Naive thymus-derived CD4-positive, alpha-beta T cell (primary cell): ENCODE measurements at regions of chr20 and their contacts with region 1.

Region 1: DNA sequence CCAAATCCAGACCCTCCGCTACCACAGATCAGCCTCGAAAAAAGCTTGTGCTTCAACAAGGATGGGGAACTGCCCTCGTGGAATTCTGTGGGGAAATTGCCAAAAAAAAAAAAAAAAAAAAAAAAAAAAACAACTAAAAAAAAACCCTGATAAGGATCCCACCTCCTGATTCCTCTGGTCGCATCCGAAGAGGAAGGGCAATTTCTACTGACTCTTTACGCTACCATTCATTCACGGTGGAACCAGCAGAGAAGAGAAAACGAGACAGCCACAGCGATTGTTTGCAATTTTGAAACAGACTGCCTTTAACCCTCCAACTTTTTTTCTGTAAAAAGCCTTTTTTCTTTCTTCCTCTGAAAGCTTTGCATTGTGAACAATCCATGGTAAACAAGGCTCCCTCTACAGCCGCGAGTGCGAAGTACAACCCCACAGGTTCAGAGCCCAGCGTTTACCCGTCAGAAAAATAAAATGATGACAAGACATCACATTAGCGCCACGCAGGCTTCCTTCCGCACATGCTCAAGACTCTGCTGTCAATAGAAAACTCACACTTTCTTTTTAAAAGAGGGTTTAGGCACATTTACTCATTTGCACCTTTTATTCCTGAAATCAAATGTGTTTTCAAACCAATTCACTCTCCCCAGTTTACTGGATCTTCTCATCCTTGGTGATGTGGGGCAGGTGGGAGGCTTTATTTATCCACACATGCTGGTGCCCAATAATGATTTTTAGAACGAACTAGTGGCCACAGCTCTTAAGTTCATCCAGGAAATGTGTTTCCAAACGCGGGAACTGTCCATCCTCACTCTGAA is 100.0 kb downstream of the NOL4L start:
- DNase-seq: peak; percentile 60 to 94 (median 91)
- ATAC-seq: peak; percentile 92
- H3K4me3 ChIP-seq: peak overlapping the region; percentile 55
- H3K4me3 Mint-ChIP-seq: peak overlapping the region; percentile 82 to 95 (median 92)
- H3K27ac ChIP-seq: peak overlapping the region; percentile 67
- H3K27ac Mint-ChIP-seq: peak overlapping the region; percentile 80 to 98 (median 88)
- H3K4me1 ChIP-seq: peaks cover 8 to 34% of the 10 kb centered on the region in 2 donors
- H3K4me1 Mint-ChIP-seq: peaks cover 20 to 58% (median 51%) of the 10 kb centered on the region in 7 donors
- H3K27me3 ChIP-seq: no peaks in the 10 kb centered on the region
- H3K27me3 Mint-ChIP-seq: peaks cover 0 to 5% (median 0%) of the 10 kb centered on the region in 5 donors

Region 2: DNA sequence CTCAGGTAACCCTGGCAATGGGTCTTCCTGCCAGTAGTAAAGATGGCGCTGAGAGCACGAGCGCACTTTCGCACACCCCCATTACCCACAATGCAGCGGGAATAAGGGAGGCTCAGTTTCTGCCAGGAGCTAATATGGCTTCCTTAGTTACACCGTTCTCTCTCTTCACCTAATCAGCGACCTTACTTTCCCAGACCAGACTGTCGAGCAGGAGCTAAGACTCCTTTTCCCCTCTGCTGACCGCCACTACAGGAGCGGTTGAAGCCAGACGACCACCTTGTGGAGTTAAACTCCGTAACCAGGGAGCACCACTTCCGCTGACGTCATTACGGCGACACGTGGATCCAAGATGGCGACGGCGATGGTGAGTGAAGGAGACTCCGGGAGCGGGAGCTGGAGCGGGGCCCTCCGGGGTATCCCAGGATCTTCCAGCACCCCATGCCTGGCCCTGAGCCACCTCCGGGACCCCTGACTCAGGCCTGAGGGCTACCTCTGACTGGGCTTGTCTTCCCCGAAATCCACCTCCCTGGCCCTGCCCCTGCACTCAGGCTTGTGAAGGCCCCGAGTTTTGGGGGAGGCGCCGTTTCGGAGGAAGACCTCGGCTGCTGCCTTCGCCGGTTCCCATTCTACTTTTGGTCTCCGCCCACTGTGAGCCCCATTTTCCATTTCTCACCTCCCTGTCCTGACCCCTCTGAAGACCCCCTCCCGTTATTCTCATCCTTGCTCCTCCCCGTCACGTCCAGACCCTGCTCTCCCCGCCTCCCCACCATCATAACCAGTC is 375.6 kb before region 1 on chr20 and contains the start of gene TM9SF4:
- CTCF ChIA-PET with region 1: no interaction called
- POLR2A ChIA-PET with region 1: no interaction called
- intact Hi-C with region 1: loop called in 1 of 2 experiments (anchors 2 kb)
- DNase-seq: peak; percentile 87 to 96 (median 93)
- ATAC-seq: peak; percentile 92
- H3K4me3 ChIP-seq: peak within 1 kb of the TSS; percentile 92
- H3K4me3 Mint-ChIP-seq: peak within 1 kb of the TSS; percentile 78 to 100 (median 96)
- H3K27ac ChIP-seq: peak within 1 kb of the TSS; percentile 94
- H3K27ac Mint-ChIP-seq: peak within 1 kb of the TSS; percentile 95 to 100 (median 100)
- H3K4me1 ChIP-seq: peaks cover 11% of the 10 kb centered on the region in 2 donors
- H3K4me1 Mint-ChIP-seq: peaks cover 26 to 44% (median 39%) of the 10 kb centered on the region in 7 donors
- H3K27me3 ChIP-seq: no peaks in the 10 kb centered on the region
- H3K27me3 Mint-ChIP-seq: no peaks in the 10 kb centered on the region
- total RNA-seq, gene TM9SF4: 35.2 to 61.0 (median 41.5) TPM

Region 3: GRCh38 chr20:32336918-32337347 is 148.2 kb before region 1 on chr20:
- CTCF ChIA-PET with region 1: no interaction called
- POLR2A ChIA-PET with region 1: no interaction called
- intact Hi-C with region 1: loop called in 1 of 2 experiments (anchors 1 kb)
- DNase-seq: peak in 7 of 9 donors; percentile 18 to 57 (median 35)
- ATAC-seq: peak; percentile 79
- H3K4me3 ChIP-seq: no peak overlapping the region
- H3K4me3 Mint-ChIP-seq: no peak overlapping the region
- H3K27ac ChIP-seq: no peak overlapping the region
- H3K27ac Mint-ChIP-seq: peak overlapping the region in 3 of 9 donors; percentile 5 to 75 (median 18)
- H3K4me1 ChIP-seq: peaks cover 5 to 13% of the 10 kb centered on the region in 2 donors
- H3K4me1 Mint-ChIP-seq: peaks cover 5 to 27% (median 8%) of the 10 kb centered on the region in 7 donors
- H3K27me3 ChIP-seq: no peaks in the 10 kb centered on the region
- H3K27me3 Mint-ChIP-seq: no peaks in the 10 kb centered on the region

Region 4: GRCh38 chr20:32443386-32443974 is 41.7 kb before region 1 on chr20:
- CTCF ChIA-PET with region 1: no interaction called
- POLR2A ChIA-PET with region 1: interaction called, 3 read pairs
- intact Hi-C with region 1: loop called in 1 of 2 experiments (anchors 2 kb)
- DNase-seq: peak in 3 of 9 donors; percentile 16 to 21 (median 21)
- ATAC-seq: peak; percentile 43
- H3K4me3 ChIP-seq: no peak overlapping the region
- H3K4me3 Mint-ChIP-seq: no peak overlapping the region
- H3K27ac ChIP-seq: peak overlapping the region; percentile 49
- H3K27ac Mint-ChIP-seq: peak overlapping the region in 8 of 9 donors; percentile 63 to 89 (median 81)
- H3K4me1 ChIP-seq: peaks cover 0 to 5% of the 10 kb centered on the region in 2 donors
- H3K4me1 Mint-ChIP-seq: peaks cover 16 to 60% (median 31%) of the 10 kb centered on the region in 7 donors
- H3K27me3 ChIP-seq: no peaks in the 10 kb centered on the region
- H3K27me3 Mint-ChIP-seq: no peaks in the 10 kb centered on the region

Region 5: DNA sequence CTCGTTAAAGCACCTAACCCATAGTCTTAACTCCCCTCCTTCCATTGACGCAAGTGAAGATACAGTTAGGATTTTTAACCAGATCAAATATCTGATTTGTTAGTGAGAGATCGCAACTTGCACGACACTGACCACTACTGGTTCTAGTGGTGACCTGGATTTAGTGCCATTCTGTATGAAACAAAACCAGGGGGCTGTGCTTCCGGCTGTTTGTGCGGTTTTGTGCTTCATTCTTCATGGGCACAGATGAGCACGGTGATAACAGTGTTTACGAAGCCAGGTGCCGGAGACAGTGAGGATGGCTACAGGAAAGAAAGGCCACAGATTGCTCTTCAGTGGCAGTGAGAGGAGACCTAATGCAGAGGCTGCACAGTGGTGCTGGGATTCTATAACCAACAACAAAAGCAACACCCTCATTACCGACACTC is 24.5 kb after region 1 on chr20:
- CTCF ChIA-PET with region 1: interaction called, 4 read pairs
- POLR2A ChIA-PET with region 1: interaction called, 58 read pairs
- intact Hi-C with region 1: loop called in 1 of 2 experiments (anchors 1 kb)
- DNase-seq: peak in 7 of 9 donors; percentile 70 to 86 (median 81)
- ATAC-seq: peak; percentile 86
- H3K4me3 ChIP-seq: peak overlapping the region; percentile 54
- H3K4me3 Mint-ChIP-seq: peak overlapping the region; percentile 56 to 95 (median 90)
- H3K27ac ChIP-seq: peak overlapping the region; percentile 84
- H3K27ac Mint-ChIP-seq: peak overlapping the region; percentile 80 to 98 (median 97)
- H3K4me1 ChIP-seq: peaks cover 42 to 71% of the 10 kb centered on the region in 2 donors
- H3K4me1 Mint-ChIP-seq: peaks cover 54 to 90% (median 79%) of the 10 kb centered on the region in 7 donors
- H3K27me3 ChIP-seq: no peaks in the 10 kb centered on the region
- H3K27me3 Mint-ChIP-seq: no peaks in the 10 kb centered on the region

Region 6: DNA sequence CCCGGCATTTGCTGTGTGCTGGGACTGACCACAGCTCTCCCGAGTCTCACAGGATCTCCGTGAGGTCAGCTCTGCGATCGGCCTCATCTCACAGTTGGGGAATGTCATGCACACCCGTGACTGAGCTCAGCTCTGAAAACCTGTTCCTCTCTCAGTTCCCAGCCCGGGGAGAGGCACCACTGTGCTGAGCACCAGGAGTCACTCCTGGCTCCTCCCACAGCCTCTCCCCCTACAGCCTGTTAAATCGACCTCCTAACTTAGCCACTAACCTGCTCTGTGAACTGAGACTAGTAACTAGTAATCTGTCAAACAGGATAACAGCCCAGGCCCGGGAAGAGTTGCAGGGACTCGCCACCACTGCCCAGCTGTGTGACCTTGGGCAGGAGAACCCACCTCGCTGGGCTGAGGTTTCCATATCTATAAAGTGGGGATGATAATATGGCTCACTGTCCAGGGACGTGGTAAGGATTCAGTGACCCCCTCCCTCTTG is 120.0 kb after region 1 on chr20:
- CTCF ChIA-PET with region 1: no interaction called
- POLR2A ChIA-PET with region 1: no interaction called
- intact Hi-C with region 1: no loop called
- DNase-seq: no peak
- ATAC-seq: peak; percentile 68
- H3K4me3 ChIP-seq: no peak overlapping the region
- H3K4me3 Mint-ChIP-seq: no peak overlapping the region
- H3K27ac ChIP-seq: no peak overlapping the region
- H3K27ac Mint-ChIP-seq: no peak overlapping the region
- H3K4me1 ChIP-seq: no peaks in the 10 kb centered on the region
- H3K4me1 Mint-ChIP-seq: peaks cover 0 to 13% (median 6%) of the 10 kb centered on the region in 7 donors
- H3K27me3 ChIP-seq: no peaks in the 10 kb centered on the region
- H3K27me3 Mint-ChIP-seq: peaks cover 0 to 3% (median 0%) of the 10 kb centered on the region in 5 donors